Vagina (tissue), 2 donors: ENCODE measurements at regions of chr1 and their contacts with region 1.

Region 1: DNA sequence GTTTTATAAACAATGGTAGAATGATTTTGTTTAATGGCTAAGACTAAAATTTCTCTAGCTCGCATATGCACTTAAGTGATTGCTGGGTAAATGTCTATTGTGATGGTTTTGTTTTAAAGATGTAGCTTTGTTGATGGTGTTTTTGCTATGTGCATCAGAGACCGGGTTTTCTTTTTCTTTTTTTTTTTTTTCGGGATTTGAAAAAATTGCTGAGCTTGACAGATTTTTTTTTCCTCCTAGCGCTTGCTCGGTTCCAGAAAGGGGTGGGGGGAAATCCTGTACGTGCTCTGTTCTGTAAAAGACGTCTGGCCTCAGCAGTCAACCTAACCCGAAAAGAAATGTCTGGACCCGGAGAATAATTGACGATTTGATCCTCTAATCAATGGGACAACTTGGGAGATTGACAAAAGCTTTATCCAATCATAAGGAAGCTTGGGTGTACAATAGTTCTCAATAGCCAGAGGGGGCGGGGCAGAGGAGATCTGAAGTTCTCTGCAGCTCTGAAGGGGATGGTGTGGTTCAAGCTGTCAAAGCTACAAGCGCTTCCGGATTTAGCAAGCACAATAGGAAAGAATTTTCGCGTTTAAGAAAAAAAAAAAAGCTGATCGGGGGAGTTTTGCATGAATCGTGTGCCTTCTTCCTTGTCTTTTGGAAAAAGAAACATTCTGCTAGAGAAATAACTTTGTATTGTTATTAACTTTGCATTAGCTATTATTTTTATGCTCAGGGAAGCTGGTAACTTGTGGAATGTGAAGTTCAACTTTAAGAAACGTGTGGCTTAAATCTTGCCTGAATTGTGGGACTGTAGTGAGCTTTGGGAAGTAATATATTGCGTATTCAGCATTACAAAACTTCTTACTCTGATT is 4.5 kb upstream of the NFIA start:
- DNase-seq: peak in 1 of 2 donors; percentile 94
- H3K4me3 ChIP-seq: peak overlapping the region; percentile 53 to 66
- H3K27ac ChIP-seq: peak overlapping the region; percentile 82
- H3K4me1 ChIP-seq: peaks cover 44% of the 10 kb centered on the region
- H3K27me3 ChIP-seq: no peaks in the 10 kb centered on the region
- CTCF ChIP-seq: no peak
- POLR2A ChIP-seq: no peak

Region 2: GRCh38 chr1:61056573-61057439 is 21.1 kb before region 1 on chr1:
- intact Hi-C with region 1: loop called (anchors 2 kb)
- DNase-seq: no peak
- H3K4me3 ChIP-seq: peak overlapping the region; percentile 72 to 83
- H3K27ac ChIP-seq: peak overlapping the region; percentile 62
- H3K4me1 ChIP-seq: peaks cover 40% of the 10 kb centered on the region
- H3K27me3 ChIP-seq: no peaks in the 10 kb centered on the region
- CTCF ChIP-seq: peak in 1 of 3 experiments; percentile 7
- POLR2A ChIP-seq: no peak

Region 3: DNA sequence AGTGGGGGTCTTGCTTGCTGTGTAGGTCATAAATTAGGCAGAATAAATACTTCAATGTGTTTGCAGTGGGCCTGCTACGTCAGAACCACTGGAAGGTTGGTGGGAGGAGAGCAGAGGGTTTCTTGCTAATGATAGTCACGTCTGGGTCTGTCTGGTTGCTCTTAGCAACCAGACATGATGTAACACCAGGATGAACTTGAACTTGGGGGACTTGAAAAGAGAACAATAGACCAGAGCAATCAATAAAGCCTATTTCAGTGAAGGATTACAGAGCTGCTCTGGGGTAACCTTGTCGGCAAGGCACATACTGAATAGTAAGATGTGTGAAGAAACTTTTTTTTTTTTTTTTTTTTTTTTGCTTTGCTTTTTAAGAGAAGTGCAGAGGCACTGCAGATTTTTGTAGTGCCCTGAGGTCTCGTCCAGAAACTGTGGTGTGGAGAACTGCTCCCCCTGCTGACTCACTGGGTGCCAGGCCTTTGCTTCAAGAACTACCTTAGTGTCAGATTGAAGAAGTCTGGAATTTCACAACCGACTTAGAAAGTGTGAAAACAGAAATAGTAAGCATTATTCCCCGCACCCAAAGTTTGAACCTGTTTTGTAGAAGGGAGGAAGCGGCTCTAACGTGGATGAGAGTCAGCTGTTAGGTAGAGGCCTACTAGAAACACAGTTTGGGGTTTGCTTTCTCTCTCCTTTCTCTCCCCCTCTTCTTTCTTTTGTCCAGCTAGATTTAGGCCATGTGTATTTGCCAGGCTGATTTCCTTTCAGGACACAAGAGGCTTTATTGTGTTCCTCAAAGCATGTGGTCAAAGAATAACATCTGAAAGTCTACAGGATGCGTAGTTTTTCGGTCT is 375.4 kb after region 1 on chr1:
- intact Hi-C with region 1: loop called (anchors 5 kb)
- DNase-seq: peak in 1 of 2 donors; percentile 95
- H3K4me3 ChIP-seq: no peak overlapping the region
- H3K27ac ChIP-seq: peak overlapping the region; percentile 54
- H3K4me1 ChIP-seq: peaks cover 56% of the 10 kb centered on the region
- H3K27me3 ChIP-seq: no peaks in the 10 kb centered on the region
- CTCF ChIP-seq: peak; percentile 12 to 66 (median 58)
- POLR2A ChIP-seq: no peak